ENCODE measurements at regions of chr6 and their contacts with region 1.

Region 1: DNA sequence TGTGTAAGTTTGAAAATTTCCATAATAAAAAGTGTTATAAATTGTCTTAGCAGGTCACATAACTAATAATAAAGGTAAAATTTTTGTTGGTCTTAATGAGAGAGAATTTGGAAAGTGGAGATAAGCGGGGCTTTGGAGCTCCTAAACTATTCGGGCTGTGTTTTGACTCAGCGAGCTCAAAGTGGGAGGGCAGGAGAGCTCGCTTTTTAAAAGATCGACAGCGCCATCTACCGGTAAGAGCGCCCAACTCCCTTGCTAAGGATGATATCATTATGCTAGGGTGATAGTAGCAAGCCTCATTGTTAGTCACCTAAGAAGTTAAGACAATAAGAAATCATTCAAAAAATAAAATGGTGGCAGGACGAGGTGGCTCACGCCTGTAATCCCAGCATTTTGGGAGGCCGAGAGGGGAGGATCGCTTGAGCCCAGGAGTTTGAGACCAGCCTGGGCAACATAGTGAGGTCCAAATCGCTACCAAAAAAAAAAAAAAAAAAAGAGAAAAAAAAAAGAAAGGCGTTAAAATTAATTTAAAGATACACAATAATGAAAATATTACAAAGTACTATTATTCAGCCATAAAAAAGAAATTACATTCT is 24.8 kb downstream of the C6orf15 start:
- DNase-seq: peak; percentile 75 to 86 (median 82)
- H3K4me3 ChIP-seq: no peak overlapping the region
- H3K4me3 Mint-ChIP-seq: peak overlapping the region in 1 of 8 donors; percentile 44
- H3K27ac ChIP-seq: no peak overlapping the region
- H3K27ac Mint-ChIP-seq: peak overlapping the region in 4 of 7 donors; percentile 32 to 58 (median 44)
- H3K4me1 ChIP-seq: peaks cover 16% of the 10 kb centered on the region
- H3K4me1 Mint-ChIP-seq: peaks cover 11 to 24% (median 18%) of the 10 kb centered on the region in 4 donors
- H3K27me3 ChIP-seq: no peaks in the 10 kb centered on the region
- H3K27me3 Mint-ChIP-seq: peaks cover 0 to 4% of the 10 kb centered on the region in 2 donors

Region 2: GRCh38 chr6:30678964-30679726 is 408.4 kb before region 1 on chr6:
- CTCF ChIA-PET with region 1: interaction called, 4 read pairs
- POLR2A ChIA-PET with region 1: interaction called, 4 read pairs
- intact Hi-C with region 1: loop called (anchors 1 kb)
- DNase-seq: peak; percentile 87 to 92 (median 89)
- H3K4me3 ChIP-seq: peak overlapping the region; percentile 70 to 93
- H3K4me3 Mint-ChIP-seq: peak overlapping the region; percentile 97 to 100 (median 99)
- H3K27ac ChIP-seq: peak overlapping the region; percentile 94
- H3K27ac Mint-ChIP-seq: peak overlapping the region; percentile 88 to 99 (median 91)
- H3K4me1 ChIP-seq: peaks cover 38% of the 10 kb centered on the region
- H3K4me1 Mint-ChIP-seq: peaks cover 17 to 57% (median 34%) of the 10 kb centered on the region in 4 donors
- H3K27me3 ChIP-seq: no peaks in the 10 kb centered on the region
- H3K27me3 Mint-ChIP-seq: no peaks in the 10 kb centered on the region

Region 3: GRCh38 chr6:30821862-30822782 is 265.5 kb before region 1 on chr6:
- CTCF ChIA-PET with region 1: interaction called, 48 read pairs
- POLR2A ChIA-PET with region 1: no interaction called
- intact Hi-C with region 1: no loop called
- DNase-seq: peak in 3 of 5 donors; percentile 26 to 38 (median 37)
- H3K4me3 ChIP-seq: no peak overlapping the region
- H3K4me3 Mint-ChIP-seq: peak overlapping the region in 1 of 8 donors; percentile 23
- H3K27ac ChIP-seq: no peak overlapping the region
- H3K27ac Mint-ChIP-seq: peak overlapping the region; percentile 39 to 83 (median 65)
- H3K4me1 ChIP-seq: peaks cover 46% of the 10 kb centered on the region
- H3K4me1 Mint-ChIP-seq: peaks cover 48 to 87% (median 61%) of the 10 kb centered on the region in 4 donors
- H3K27me3 ChIP-seq: no peaks in the 10 kb centered on the region
- H3K27me3 Mint-ChIP-seq: no peaks in the 10 kb centered on the region

Region 4: DNA sequence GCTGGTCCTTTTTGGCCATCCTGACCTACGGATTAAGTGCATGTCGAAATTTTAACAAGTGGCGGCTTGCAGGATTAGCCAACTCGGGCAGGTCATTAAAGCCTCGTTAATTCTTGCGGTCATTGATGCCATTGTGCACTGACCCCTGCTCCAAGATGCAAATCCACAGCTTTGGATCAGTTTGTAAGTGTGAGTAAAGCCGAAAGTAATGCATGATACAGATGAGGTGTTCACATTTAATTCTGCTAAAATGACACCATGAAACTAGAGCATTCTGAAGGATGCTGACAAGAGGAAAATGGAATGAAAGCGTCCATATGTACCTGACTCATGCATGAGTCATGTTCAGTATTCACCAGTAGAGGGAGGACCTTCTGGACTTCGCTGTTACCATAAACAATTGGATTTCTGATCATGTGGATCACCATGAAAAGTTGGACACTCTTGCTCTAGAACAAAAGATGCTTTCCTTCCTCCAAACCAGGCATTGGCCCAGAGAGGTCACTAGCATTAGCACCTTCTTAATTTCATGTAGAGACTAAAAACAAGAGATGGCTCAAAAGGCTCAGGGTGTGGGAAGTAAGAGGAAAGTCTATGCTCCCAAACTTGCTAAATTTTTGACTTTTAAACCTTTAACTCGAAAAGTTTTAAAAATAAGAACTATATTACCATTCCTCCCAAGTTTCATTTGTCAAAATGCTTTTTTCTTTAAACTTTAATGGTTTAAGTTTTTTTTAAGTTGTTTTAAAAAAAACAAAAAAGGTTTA is 29.3 kb before region 1 on chr6:
- CTCF ChIA-PET with region 1: interaction called, 25 read pairs
- POLR2A ChIA-PET with region 1: interaction called, 3 read pairs
- intact Hi-C with region 1: loop called (anchors 1 kb)
- DNase-seq: peak in 2 of 5 donors; percentile 5 to 11
- H3K4me3 ChIP-seq: no peak overlapping the region
- H3K4me3 Mint-ChIP-seq: no peak overlapping the region
- H3K27ac ChIP-seq: no peak overlapping the region
- H3K27ac Mint-ChIP-seq: no peak overlapping the region
- H3K4me1 ChIP-seq: no peaks in the 10 kb centered on the region
- H3K4me1 Mint-ChIP-seq: no peaks in the 10 kb centered on the region
- H3K27me3 ChIP-seq: no peaks in the 10 kb centered on the region
- H3K27me3 Mint-ChIP-seq: peaks cover 8 to 21% of the 10 kb centered on the region in 2 donors

Region 5: GRCh38 chr6:31103136-31103535 is 15.5 kb after region 1 on chr6:
- CTCF ChIA-PET with region 1: interaction called, 19 read pairs
- POLR2A ChIA-PET with region 1: no interaction called
- intact Hi-C with region 1: no loop called
- DNase-seq: no peak
- H3K4me3 ChIP-seq: no peak overlapping the region
- H3K4me3 Mint-ChIP-seq: peak overlapping the region in 1 of 8 donors; percentile 41
- H3K27ac ChIP-seq: no peak overlapping the region
- H3K27ac Mint-ChIP-seq: no peak overlapping the region
- H3K4me1 ChIP-seq: no peaks in the 10 kb centered on the region
- H3K4me1 Mint-ChIP-seq: peaks cover 0 to 9% (median 6%) of the 10 kb centered on the region in 4 donors
- H3K27me3 ChIP-seq: no peaks in the 10 kb centered on the region
- H3K27me3 Mint-ChIP-seq: no peaks in the 10 kb centered on the region

Measured in CD4-positive, alpha-beta memory T cell (primary cell).